Dorsolateral prefrontal cortex (tissue), 120 donors: ENCODE measurements at regions of chr11 and their contacts with region 1.

Region 1: DNA sequence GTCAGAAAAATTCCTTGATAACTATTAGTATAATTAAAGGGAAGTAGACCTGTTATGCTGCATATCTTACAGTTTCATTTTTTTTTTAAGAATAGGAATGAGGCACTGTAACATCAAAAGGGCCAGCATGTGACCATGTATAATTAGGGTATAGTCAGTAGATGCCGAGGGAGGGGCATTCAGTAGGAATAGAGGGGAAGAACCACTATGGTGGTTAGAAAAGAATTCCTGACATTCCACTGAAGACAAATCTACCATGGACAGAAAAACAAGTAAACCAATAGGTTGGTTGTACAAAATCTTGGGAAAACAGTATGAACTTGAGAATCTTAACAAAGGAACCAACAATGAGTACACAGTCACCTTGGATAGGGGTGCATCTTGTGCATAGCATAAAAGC is 78.4 kb upstream of the CCDC179 start:
- DNase-seq: no peak
- H3K4me3 ChIP-seq: no peak overlapping the region
- H3K27ac ChIP-seq: no peak overlapping the region
- H3K27me3 ChIP-seq: no peaks in the 10 kb centered on the region
- CTCF ChIP-seq: no peak

Region 2: GRCh38 chr11:22898036-22898435 is 40.7 kb before region 1 on chr11:
- intact Hi-C with region 1: loop called in 1 of 2 experiments (anchors 2 kb)
- DNase-seq: no peak
- H3K4me3 ChIP-seq: no peak overlapping the region
- H3K27ac ChIP-seq: no peak overlapping the region
- H3K27me3 ChIP-seq: no peaks in the 10 kb centered on the region
- CTCF ChIP-seq: no peak

Region 3: GRCh38 chr11:22976146-22976545 is 37.4 kb after region 1 on chr11:
- intact Hi-C with region 1: no loop called
- DNase-seq: no peak
- H3K4me3 ChIP-seq: no peak overlapping the region
- H3K27ac ChIP-seq: no peak overlapping the region
- H3K27me3 ChIP-seq: no peaks in the 10 kb centered on the region
- CTCF ChIP-seq: no peak